Heart left ventricle (tissue), 16 donors: ENCODE measurements at regions of chr14 and their contacts with region 1.

Region 1: GRCh38 chr14:59428581-59429012 is 36.6 kb downstream of the GPR135 start:
- DNase-seq: no peak
- ATAC-seq: peak in 2 of 4 donors; percentile 17 to 27
- H3K4me3 ChIP-seq: no peak overlapping the region
- H3K27ac ChIP-seq: peak overlapping the region in 11 of 12 donors; percentile 44 to 79 (median 63)
- H3K4me1 ChIP-seq: peaks cover 0 to 64% (median 35%) of the 10 kb centered on the region in 12 donors
- H3K27me3 ChIP-seq: no peaks in the 10 kb centered on the region
- CTCF ChIP-seq: peak in 11 of 12 donors; percentile 11 to 64 (median 39)
- POLR2A ChIP-seq: no peak

Region 2: DNA sequence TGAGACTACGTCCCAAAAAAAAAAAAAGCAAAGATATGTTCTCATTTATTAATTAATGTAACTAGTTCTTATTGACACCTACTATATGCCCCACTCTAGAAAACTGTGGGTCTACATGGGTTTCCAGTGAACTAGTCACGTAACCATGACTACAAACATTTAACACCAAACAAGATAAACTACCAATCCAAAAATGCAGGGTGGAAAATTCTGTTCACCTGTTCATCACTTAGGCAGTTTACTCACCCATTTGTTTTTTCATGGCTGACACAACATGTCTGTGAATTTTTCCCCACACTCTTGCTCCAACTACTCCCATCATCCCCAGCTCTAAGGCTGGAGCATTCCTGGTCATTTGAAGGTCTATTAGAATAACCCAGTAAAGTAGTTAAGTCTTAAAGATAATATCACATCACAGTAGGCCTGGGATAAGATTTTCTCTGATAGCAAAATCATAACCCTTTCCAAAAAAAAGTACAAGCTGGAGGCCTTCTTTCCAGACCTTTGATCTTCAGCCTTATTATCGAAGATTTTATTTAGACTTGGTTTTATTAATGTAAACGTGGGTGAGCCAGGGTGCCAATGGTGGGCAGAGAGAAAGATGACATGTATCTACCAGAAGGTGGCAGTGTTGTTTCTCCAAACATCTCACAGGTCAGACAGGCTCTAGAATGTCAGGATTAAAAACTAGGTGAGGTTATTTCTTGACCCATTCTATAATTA is 301.7 kb before region 1 on chr14:
- intact Hi-C with region 1: loop called in 2 of 10 experiments (anchors 5 kb)
- DNase-seq: peak in 1 of 5 donors; percentile 18
- ATAC-seq: peak; percentile 70 to 92 (median 83)
- H3K4me3 ChIP-seq: no peak overlapping the region
- H3K27ac ChIP-seq: no peak overlapping the region
- H3K4me1 ChIP-seq: peaks cover 0 to 6% (median 0%) of the 10 kb centered on the region in 12 donors
- H3K27me3 ChIP-seq: no peaks in the 10 kb centered on the region
- CTCF ChIP-seq: peak; percentile 65 to 88 (median 82)
- POLR2A ChIP-seq: no peak

Region 3: DNA sequence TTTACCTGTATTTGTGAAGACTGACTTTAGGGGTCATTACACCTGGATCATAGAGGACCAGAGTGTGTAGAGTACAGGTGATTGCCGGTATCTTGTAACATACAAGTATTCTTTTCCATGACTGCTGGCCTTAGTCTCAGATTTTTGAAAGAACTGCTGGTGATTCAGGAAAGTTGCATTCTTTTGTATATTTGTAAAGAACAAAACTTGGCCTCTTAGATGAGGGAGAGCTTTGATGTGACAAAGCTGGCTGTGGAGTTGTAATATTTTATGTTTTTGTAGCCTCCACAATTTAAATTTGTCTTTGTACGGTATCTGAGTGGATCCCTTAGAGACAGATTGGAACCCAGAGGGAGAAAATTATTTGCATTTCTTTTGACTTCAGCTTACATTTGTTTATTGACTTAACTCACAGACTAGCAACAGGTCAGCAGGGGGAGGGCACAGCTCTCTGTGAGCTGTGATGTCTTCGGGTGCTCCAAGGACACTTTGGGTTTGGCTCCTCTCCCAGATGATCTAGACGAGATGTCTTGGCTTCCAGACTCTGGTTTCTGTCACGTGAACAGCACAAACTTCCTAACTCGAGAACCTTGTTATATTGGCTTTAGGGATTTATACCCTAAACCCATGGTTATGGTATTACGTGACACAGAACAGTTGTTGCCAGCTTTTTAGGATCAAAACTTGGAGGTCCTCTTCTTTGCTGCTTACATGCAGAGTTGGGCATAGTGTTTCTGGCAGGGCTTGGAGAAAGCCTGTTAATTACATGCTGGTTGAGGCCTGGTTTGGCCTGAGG is 174.3 kb before region 1 on chr14:
- intact Hi-C with region 1: loop called in 2 of 10 experiments (anchors 1 to 10 kb)
- DNase-seq: peak; percentile 70 to 87 (median 86)
- ATAC-seq: peak; percentile 81 to 92 (median 90)
- H3K4me3 ChIP-seq: no peak overlapping the region
- H3K27ac ChIP-seq: peak overlapping the region; percentile 72 to 93 (median 86)
- H3K4me1 ChIP-seq: peaks cover 19 to 78% (median 63%) of the 10 kb centered on the region in 12 donors
- H3K27me3 ChIP-seq: no peaks in the 10 kb centered on the region
- CTCF ChIP-seq: peak in 3 of 12 donors; percentile 11 to 40 (median 20)
- POLR2A ChIP-seq: no peak

Region 4: DNA sequence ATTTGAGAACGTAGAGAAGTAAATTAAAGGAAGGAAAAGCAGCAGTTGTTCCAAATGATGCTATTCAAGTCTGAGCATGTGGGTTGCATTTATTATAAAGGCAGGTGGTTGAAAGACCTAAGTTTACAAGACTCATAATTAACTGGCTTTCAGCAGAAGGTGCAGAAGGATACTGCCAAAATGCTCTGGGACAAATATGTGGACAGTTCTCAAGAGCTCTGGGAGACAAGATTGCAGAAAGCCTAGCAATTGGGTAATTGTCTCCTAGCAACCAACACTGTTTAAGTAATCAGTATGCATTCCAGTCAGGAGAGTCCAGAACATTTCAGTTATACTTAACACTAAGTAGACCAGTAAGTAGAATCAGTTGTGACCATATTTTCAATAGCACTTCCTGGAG is 94.9 kb before region 1 on chr14:
- intact Hi-C with region 1: loop called in 6 of 10 experiments (anchors 5 to 10 kb)
- DNase-seq: peak in 2 of 5 donors; percentile 39 to 56
- ATAC-seq: peak; percentile 91 to 93 (median 92)
- H3K4me3 ChIP-seq: peak overlapping the region in 4 of 12 donors; percentile 3 to 11 (median 4)
- H3K27ac ChIP-seq: peak overlapping the region; percentile 72 to 92 (median 82)
- H3K4me1 ChIP-seq: peaks cover 9 to 87% (median 68%) of the 10 kb centered on the region in 12 donors
- H3K27me3 ChIP-seq: no peaks in the 10 kb centered on the region
- CTCF ChIP-seq: no peak
- POLR2A ChIP-seq: no peak

Region 5: GRCh38 chr14:59377991-59378601 is 50.5 kb before region 1 on chr14:
- intact Hi-C with region 1: loop called in 1 of 10 experiments (anchors 10 kb)
- DNase-seq: no peak
- ATAC-seq: peak; percentile 59 to 74 (median 71)
- H3K4me3 ChIP-seq: no peak overlapping the region
- H3K27ac ChIP-seq: peak overlapping the region in 8 of 12 donors; percentile 36 to 75 (median 59)
- H3K4me1 ChIP-seq: peaks cover 0 to 34% (median 15%) of the 10 kb centered on the region in 12 donors
- H3K27me3 ChIP-seq: no peaks in the 10 kb centered on the region
- CTCF ChIP-seq: no peak
- POLR2A ChIP-seq: no peak

Region 6: DNA sequence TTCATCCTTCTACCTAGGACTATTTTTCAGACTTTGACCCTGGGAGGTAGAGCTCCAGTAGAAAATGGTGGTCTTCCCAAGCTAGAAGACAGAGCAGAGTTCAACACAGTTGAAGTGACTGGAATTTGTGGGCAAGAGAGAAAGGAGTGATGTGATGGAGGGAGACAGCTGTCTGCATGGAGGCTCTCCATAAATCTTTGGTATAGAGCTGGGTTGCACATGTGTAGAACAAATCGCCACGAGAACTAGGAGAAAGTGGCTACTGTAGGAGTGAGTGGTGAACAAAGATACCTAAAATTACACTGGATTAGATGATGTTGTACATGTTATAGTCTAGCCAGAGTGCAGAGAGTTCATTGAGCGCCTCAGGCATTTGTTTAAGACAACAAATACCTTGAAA is 22.1 kb after region 1 on chr14:
- intact Hi-C with region 1: no loop called
- DNase-seq: no peak
- ATAC-seq: no peak
- H3K4me3 ChIP-seq: no peak overlapping the region
- H3K27ac ChIP-seq: no peak overlapping the region
- H3K4me1 ChIP-seq: peaks cover 0 to 5% (median 0%) of the 10 kb centered on the region in 12 donors
- H3K27me3 ChIP-seq: no peaks in the 10 kb centered on the region
- CTCF ChIP-seq: no peak
- POLR2A ChIP-seq: no peak

Region 7: DNA sequence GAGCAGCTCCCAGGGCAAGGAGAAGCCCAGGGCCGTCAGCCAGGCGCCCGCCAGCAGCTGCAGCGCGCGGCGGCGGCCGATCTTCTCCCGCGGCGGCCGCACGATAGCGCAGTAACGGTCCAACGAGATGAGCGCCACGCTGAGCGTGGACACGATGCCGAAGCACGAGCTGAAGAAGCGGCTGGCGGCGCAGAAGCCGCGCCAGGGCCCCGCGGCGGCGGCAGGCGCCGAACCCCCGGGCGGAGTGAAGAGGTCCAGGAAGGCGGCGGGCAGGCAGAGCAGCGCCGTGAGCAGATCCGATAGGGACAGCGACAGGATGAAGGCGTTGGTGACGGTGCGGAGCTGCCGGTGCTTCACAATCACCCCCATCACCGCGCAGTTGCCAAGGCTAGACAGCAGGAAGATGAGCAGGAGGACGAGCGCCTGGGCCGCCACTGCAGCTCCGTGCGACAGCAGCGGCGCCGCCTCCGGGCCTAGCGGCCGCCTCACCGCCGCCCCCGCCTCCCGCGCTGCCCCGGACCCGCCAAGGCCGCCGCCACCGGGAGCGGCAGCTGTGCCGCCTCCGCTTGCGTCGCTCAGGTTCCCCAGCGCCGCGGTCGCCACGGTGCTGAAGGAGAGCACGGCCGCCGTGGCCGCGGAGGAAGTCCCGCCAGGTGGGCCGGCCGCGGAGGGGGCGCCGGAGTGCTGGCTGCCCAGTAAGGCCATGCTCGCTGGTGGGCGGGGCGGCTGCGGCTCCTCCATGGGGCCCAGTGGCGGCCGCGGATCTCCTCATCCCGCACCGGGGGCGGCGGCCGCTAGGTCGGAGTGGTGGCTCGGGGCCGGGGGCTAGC is 36.1 kb after region 1 on chr14:
- intact Hi-C with region 1: no loop called
- DNase-seq: peak; percentile 67 to 75 (median 73)
- ATAC-seq: peak; percentile 38 to 94 (median 88)
- H3K4me3 ChIP-seq: peak overlapping the region; percentile 46 to 75 (median 64)
- H3K27ac ChIP-seq: peak overlapping the region in 9 of 12 donors; percentile 31 to 82 (median 58)
- H3K4me1 ChIP-seq: peaks cover 4 to 17% (median 7%) of the 10 kb centered on the region in 12 donors
- H3K27me3 ChIP-seq: peaks cover 0 to 16% (median 0%) of the 10 kb centered on the region in 9 donors
- CTCF ChIP-seq: no peak
- POLR2A ChIP-seq: no peak